Aorta (tissue), 5 donors: ENCODE measurements at regions of chr18 and their contacts with region 1.

Region 1: DNA sequence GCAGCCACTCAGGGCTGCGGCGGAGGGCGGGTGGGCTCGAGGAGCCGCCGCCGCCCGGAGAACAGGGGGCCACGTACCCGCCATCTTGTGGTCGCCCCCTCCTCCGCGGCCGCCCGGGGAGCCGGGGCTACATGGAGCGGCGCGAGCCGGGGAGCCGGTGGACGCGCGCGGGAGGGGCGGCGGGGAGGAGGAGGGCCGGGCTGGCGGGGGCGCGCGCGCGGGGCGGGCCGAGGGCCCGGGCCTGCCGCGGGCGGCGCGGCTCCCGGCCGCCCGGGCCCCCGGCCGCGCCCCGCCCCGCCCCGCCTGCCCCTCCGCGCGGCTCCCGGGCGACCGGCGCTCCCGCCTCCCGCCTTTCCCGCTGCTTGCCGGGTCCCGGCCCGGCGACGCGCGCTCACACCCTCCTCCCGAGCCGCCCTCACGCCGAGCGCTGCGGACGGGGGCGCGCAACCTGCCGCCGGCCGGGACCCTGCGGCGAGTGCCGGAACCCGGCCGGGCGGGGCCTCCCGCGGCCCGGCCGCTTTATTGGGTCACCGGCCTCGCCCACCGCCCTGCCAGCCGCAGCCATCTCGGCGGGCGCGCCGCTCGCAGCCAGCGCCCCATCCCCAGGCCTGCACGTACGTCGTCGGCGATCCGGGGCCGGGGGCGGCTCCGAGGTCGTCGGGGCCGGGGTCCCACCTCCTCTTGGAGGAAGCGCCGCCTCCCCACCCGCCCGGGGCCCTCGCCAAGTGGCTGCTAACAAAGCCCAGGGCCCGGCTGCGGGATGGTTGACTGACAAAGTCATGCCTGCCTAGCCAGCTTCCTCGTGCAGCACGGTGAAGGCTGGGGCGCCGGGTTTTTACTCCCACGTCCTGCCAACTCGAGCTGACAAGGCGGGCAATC is at the start of gene PPP4R1:
- DNase-seq: peak; percentile 88 to 92
- ATAC-seq: peak; percentile 89
- H3K4me3 ChIP-seq: peak within 1 kb of the TSS; percentile 77 to 100
- H3K27ac ChIP-seq: peak within 1 kb of the TSS; percentile 97 to 99
- H3K4me1 ChIP-seq: peaks cover 2 to 9% of the 10 kb centered on the region in 2 donors
- H3K27me3 ChIP-seq: no peaks in the 10 kb centered on the region
- total RNA-seq, gene PPP4R1: 119 to 121 TPM

Region 2: GRCh38 chr18:9631814-9632496 is 17.3 kb after region 1 on chr18:
- intact Hi-C with region 1: loop called in 1 of 2 experiments (anchors 2 kb)
- DNase-seq: no peak
- ATAC-seq: no peak
- H3K4me3 ChIP-seq: no peak overlapping the region
- H3K27ac ChIP-seq: no peak overlapping the region
- H3K4me1 ChIP-seq: peaks cover 2 to 5% of the 10 kb centered on the region in 2 donors
- H3K27me3 ChIP-seq: no peaks in the 10 kb centered on the region

Region 3: DNA sequence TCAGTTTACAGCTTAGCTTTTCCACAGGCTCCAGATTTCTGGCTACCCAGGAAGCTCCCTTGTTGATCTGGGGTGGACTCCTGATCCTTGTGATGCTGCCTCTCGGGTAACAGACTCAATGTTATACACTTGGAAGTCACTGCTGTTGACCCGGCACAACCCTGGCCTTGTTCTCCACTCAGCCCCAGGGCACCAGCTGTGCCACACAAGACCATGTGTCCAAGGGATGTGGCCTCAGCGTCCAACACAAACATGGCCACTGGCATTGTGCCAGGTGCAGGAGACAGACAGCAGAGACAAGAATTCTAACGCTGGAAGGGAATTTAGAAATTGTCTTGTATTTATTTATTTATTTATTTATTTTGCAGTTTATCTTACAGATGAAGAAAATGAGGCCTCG is 38.8 kb after region 1 on chr18:
- intact Hi-C with region 1: loop called in 1 of 2 experiments (anchors 5 kb)
- DNase-seq: peak; percentile 83 to 87
- ATAC-seq: peak; percentile 79
- H3K4me3 ChIP-seq: no peak overlapping the region
- H3K27ac ChIP-seq: peak overlapping the region in 1 of 2 donors; percentile 13
- H3K4me1 ChIP-seq: no peaks in the 10 kb centered on the region
- H3K27me3 ChIP-seq: no peaks in the 10 kb centered on the region

Region 4: DNA sequence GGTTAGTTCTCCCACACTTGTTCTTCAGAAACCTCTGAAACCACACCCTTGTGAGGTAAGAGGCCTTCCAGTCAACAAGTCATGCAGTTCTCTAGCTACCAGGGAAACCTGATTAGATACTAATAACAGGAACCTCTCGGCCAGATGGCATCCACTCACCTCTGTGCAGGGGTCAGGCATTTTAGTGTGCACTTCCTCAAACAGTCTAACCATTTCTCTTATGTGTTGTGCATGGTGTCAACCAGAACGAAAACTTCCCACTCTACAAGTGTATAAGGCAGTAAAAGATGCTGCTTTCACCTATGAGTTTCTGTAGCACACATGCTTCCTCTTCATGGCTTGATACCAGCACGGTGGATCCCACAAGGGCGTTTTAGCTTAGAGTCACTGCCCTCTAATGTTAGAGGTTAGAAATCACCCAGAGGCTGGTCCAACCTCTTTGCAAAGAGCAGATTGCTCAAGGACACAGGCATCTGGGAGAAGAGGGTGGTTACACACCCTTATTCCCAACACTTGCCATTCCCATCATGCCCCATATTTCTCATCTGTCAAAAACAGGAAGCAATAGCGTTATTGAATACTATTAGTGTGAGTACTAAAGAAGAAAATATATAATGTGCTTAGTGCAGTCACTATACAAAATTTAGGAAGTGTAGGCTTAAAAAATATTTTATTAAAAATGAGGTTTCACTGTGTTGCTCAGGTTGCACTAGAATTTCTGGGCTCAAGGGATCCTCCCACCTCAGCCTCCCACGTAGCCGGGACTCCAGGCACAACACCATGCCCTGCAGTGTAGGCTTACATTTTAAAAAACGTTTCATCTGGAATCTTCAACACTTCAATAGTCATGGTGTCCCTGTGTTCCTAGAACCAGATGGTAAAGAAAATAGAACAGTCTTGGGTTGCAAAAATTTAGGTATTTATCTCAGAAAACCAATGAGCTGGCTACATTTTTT is 58.9 kb after region 1 on chr18:
- intact Hi-C with region 1: loop called in 1 of 2 experiments (anchors 2 kb)
- DNase-seq: no peak
- ATAC-seq: peak; percentile 65
- H3K4me3 ChIP-seq: no peak overlapping the region
- H3K27ac ChIP-seq: no peak overlapping the region
- H3K4me1 ChIP-seq: peaks cover 0 to 5% of the 10 kb centered on the region in 2 donors
- H3K27me3 ChIP-seq: no peaks in the 10 kb centered on the region

Region 5: DNA sequence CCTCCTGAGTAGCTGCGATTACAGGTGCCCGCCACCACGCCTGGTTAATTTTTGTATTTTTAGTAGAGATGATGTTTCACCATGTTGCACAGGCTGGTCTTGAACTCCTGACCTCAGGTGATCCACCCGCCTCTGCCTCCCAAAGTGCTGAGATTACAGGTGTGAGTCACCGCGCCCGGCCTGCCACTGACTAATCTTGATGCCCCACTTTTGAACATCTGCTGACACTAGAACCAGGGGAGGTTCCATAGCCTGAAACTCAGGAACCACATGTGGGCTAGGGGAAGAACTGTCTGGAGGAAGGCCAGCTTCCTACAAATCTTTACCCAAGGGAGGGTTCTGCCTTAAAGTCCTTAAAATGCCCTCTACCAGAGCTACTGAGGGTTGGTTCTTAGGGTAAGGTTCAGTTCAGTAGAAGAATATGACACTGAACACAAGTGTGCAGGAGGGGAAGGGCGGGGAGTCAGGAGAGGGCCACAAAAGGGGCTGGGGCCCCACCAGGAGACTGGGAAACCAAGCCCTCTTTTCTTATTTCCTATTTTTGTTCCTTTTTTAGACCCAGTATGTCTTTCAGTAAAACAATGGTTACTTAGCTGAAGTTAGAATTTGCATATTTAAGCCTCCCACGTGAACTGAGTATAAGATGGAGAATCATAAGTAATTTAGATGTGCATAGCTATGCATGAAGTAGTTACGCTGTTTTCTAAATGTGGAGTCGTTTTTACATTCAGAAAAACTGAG is 87.1 kb after region 1 on chr18:
- intact Hi-C with region 1: no loop called
- DNase-seq: no peak
- ATAC-seq: no peak
- H3K4me3 ChIP-seq: no peak overlapping the region
- H3K27ac ChIP-seq: no peak overlapping the region
- H3K4me1 ChIP-seq: no peaks in the 10 kb centered on the region
- H3K27me3 ChIP-seq: no peaks in the 10 kb centered on the region

Region 6: DNA sequence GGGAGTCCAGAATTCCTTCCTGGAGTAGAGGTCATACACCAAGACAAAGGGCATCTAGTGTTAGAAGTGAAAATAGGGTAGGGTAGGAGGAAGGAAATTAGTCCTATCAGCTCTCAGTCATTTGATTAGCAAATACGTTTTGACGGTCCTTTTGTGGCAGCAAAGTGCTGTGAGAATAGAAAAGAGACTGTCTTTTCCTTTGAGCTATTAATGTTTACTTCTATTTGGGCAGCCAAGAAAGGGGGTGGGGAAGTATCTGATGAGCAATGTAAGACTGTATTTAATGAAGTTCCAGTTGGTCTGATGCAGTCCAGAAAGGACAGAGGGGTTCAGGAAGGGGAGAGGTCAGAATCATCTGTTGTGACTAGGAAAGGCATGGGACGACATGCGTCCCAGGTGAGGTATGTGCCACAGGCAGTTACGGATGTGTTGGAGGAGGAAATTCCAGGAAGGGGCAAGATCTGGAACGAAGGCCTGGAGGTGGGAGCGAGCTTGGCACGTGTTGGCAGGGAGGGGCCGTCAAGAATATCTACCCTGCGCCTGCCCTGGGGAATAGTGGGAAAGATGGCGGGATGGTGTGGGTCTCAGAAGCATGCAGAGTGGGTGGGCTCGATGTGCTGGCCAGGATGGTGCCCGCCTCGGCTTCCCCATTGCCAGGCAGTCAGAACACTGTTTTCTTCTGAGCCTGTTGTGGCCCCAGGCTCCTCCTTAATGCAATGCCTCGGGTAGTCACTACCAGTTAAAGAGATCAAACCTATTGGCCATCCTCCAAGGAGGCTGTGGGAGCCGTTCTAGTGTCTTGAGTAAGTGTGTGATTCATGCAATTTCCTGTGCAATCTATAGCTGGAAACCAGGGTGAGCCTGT is 213.2 kb after region 1 on chr18:
- intact Hi-C with region 1: no loop called
- DNase-seq: peak in 1 of 2 donors; percentile 78
- ATAC-seq: no peak
- H3K4me3 ChIP-seq: no peak overlapping the region
- H3K27ac ChIP-seq: no peak overlapping the region
- H3K4me1 ChIP-seq: peaks cover 4 to 14% of the 10 kb centered on the region in 2 donors
- H3K27me3 ChIP-seq: no peaks in the 10 kb centered on the region